GM12878 (cell line): ENCODE measurements at regions of chr10 and their contacts with region 1.

Region 1: DNA sequence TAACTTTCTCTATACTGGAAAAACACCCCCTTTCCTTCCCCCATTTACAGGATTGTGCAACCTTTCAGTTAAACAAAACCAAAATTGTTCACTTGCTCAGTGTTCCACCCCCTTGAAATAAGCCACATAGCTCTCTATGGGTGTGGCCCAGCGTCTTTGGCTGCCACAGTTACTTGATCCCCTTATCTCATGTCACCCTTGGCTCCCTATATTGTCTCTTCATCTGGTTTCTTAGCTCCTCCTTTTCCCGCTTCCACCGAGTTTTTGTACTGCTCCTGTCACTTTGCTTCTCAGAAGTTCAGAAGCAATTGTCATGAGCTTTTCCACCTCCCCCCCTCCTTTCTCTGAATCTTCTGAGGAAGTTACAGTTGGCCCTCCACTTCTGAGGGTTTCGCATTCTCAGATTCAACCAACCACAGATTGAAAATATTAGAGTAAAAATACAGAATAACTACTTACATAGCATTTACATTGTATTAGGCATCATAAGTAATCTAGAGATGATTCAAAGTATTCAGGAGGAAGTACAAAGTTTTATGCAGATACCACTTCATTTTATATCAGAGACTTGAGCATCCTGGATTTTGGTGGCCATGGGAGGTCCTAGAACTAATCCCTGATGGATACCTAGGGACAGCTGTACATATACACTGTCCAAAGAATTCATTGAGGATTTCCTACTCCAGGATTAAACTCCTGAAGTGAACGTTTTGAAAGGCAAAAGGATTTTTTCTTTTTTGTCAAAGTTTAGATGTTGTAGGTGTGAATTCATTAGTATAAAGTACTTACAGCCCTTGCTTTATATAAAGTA is 60.4 kb downstream of the ADD3 start:
- DNase-seq: no peak
- ATAC-seq: peak; percentile 75
- H3K4me3 ChIP-seq: no peak overlapping the region; the same call in none of the 2 replicates
- H3K27ac ChIP-seq: peak overlapping the region; percentile 95
- H3K4me1 ChIP-seq: peaks cover 62% of the 10 kb centered on the region
- H3K27me3 ChIP-seq: no peaks in the 10 kb centered on the region
- CTCF ChIP-seq: no peak
- EP300 ChIP-seq: no peak
- POLR2A ChIP-seq: no peak
- RAD21 ChIP-seq: no peak

Region 2: DNA sequence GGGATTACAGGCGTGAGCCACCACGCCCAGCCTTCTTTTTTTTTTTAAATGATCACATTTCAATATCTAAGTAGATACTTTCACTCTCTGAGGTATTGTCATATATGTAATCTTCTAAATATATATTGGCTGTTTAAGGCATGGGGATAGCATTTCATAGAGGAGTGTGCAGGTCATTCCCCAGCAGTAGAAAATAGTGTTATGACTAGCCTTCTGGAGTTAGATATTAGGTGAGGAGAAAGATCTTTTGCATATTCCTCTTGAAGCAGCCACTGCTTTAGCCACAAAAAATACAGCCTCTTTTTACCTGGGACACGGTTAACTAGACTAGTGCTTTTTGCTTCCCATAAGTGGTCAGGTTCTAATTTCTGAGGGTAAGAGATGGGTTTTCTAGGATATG is 31.5 kb before region 1 on chr10:
- CTCF ChIA-PET with region 1: interaction called, 11 read pairs
- POLR2A ChIA-PET with region 1: interaction called, 3 read pairs
- RAD21 ChIA-PET with region 1: interaction called, 7 read pairs
- SMC1A ChIA-PET with region 1: interaction called, 16 read pairs
- in situ Hi-C with region 1: no loop called
- intact Hi-C with region 1: loop called (anchors 2 kb)
- DNase-seq: peak; percentile 48
- ATAC-seq: peak; percentile 78
- H3K4me3 ChIP-seq: peak overlapping the region; percentile 20
- H3K27ac ChIP-seq: peak overlapping the region; percentile 42; the same call in 1 of the 2 replicates
- H3K4me1 ChIP-seq: peaks cover 16% of the 10 kb centered on the region
- H3K27me3 ChIP-seq: no peaks in the 10 kb centered on the region
- CTCF ChIP-seq: no peak
- EP300 ChIP-seq: 0 out of 4 replicates have a peak, but pooled peaks of 1 of the 2 experiments have one; percentile 17
- POLR2A ChIP-seq: no peak
- RAD21 ChIP-seq: no peak

Region 3: GRCh38 chr10:110081911-110082310 is 13.7 kb after region 1 on chr10:
- CTCF ChIA-PET with region 1: interaction called, 10 read pairs
- POLR2A ChIA-PET with region 1: interaction called, 44 read pairs
- RAD21 ChIA-PET with region 1: interaction called, 128 read pairs
- SMC1A ChIA-PET with region 1: interaction called, 172 read pairs
- in situ Hi-C with region 1: no loop called
- intact Hi-C with region 1: loop called (anchors 2 kb)
- DNase-seq: no peak
- ATAC-seq: peak; percentile 11
- H3K4me3 ChIP-seq: no peak overlapping the region
- H3K27ac ChIP-seq: peak overlapping the region; percentile 57; the same call in 1 of the 2 replicates
- H3K4me1 ChIP-seq: peaks cover 22% of the 10 kb centered on the region
- H3K27me3 ChIP-seq: no peaks in the 10 kb centered on the region
- CTCF ChIP-seq: no peak
- EP300 ChIP-seq: no peak
- POLR2A ChIP-seq: no peak
- RAD21 ChIP-seq: no peak

Region 4: GRCh38 chr10:110087682-110088081 is 19.5 kb after region 1 on chr10:
- CTCF ChIA-PET with region 1: interaction called, 3 read pairs
- POLR2A ChIA-PET with region 1: interaction called, 44 read pairs
- RAD21 ChIA-PET with region 1: interaction called, 128 read pairs
- SMC1A ChIA-PET with region 1: interaction called, 172 read pairs
- in situ Hi-C with region 1: no loop called
- intact Hi-C with region 1: loop called (anchors 2 kb)
- DNase-seq: no peak
- ATAC-seq: no peak
- H3K4me3 ChIP-seq: no peak overlapping the region
- H3K27ac ChIP-seq: no peak overlapping the region
- H3K4me1 ChIP-seq: peaks cover 15% of the 10 kb centered on the region
- H3K27me3 ChIP-seq: no peaks in the 10 kb centered on the region
- CTCF ChIP-seq: no peak
- EP300 ChIP-seq: no peak
- POLR2A ChIP-seq: no peak
- RAD21 ChIP-seq: no peak